ENCODE measurements at regions of chr1 and their contacts with region 1.

Region 1: GRCh38 chr1:112674439-112674985 is at the start of gene MOV10:
- DNase-seq: peak; percentile 84
- H3K4me3 Mint-ChIP-seq: peak within 1 kb of the TSS; percentile 99
- H3K27ac Mint-ChIP-seq: peak within 1 kb of the TSS; percentile 100
- H3K4me1 Mint-ChIP-seq: peaks cover 35% of the 10 kb centered on the region
- H3K27me3 Mint-ChIP-seq: no peaks in the 10 kb centered on the region
- CTCF ChIP-seq: no peak
- total RNA-seq, gene MOV10: 54.9 and 55.6 TPM in 2 replicates

Region 2: DNA sequence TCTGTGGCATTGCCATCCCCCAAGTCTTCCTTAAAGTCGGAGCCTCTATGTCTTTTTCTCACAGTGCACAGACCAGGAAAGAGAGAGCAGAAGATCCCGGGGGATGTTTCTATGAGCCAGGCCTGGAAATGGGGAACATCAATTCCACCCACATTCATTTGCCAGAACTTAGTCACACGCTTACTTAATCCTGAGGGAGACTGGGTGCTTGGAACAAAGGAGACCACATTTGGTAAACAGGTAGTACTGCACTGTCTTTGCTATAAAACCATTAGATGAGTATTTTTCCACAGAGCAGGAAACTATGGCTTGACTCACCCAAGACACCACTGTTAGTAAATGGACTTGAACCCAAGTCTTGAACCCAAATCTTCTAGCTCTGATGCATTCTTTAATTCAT is 339.2 kb before region 1 on chr1:
- CTCF ChIA-PET with region 1: no interaction called
- POLR2A ChIA-PET with region 1: no interaction called
- intact Hi-C with region 1: no loop called
- DNase-seq: peak; percentile 39
- H3K4me3 Mint-ChIP-seq: no peak overlapping the region
- H3K27ac Mint-ChIP-seq: no peak overlapping the region
- H3K4me1 Mint-ChIP-seq: peaks cover 26% of the 10 kb centered on the region
- H3K27me3 Mint-ChIP-seq: no peaks in the 10 kb centered on the region
- CTCF ChIP-seq: no peak

Region 3: GRCh38 chr1:112395821-112396652 is 278.5 kb before region 1 on chr1 and contains the start of gene CTTNBP2NL:
- CTCF ChIA-PET with region 1: interaction called, 11 read pairs
- POLR2A ChIA-PET with region 1: interaction called, 11 read pairs
- intact Hi-C with region 1: loop called (anchors 2 kb)
- DNase-seq: peak; percentile 97
- H3K4me3 Mint-ChIP-seq: peak within 1 kb of the TSS; percentile 98
- H3K27ac Mint-ChIP-seq: peak within 1 kb of the TSS; percentile 98
- H3K4me1 Mint-ChIP-seq: peaks cover 53% of the 10 kb centered on the region
- H3K27me3 Mint-ChIP-seq: no peaks in the 10 kb centered on the region
- CTCF ChIP-seq: no peak
- total RNA-seq, gene CTTNBP2NL: 41.3 and 48.8 TPM in 2 replicates

Region 4: DNA sequence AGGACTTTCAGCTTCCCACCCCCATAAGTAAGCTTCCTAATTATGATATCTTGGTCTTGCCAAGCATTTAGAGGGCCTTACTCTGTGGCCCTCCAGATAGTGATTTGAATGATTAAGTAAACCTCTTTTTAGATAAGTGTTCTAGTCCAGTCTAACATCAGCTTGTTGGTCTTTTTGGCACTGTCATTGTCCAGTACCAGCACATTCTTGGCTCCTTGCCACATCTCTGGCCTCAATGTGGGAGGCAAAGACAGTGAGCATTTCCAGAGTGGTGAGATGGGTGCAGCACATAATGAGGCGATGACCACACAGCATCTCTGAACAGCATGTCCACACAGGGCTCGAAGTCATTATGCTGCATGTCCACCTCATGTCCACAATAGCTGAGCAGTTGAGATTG is 48.8 kb before region 1 on chr1:
- CTCF ChIA-PET with region 1: interaction called, 5 read pairs
- POLR2A ChIA-PET with region 1: interaction called, 76 read pairs
- intact Hi-C with region 1: loop called (anchors 1 kb)
- DNase-seq: peak; percentile 26
- H3K4me3 Mint-ChIP-seq: no peak overlapping the region
- H3K27ac Mint-ChIP-seq: no peak overlapping the region
- H3K4me1 Mint-ChIP-seq: peaks cover 38% of the 10 kb centered on the region
- H3K27me3 Mint-ChIP-seq: no peaks in the 10 kb centered on the region
- CTCF ChIP-seq: no peak

Region 5: GRCh38 chr1:112651205-112651604 is 23.3 kb before region 1 on chr1:
- CTCF ChIA-PET with region 1: interaction called, 22 read pairs
- POLR2A ChIA-PET with region 1: interaction called, 5 read pairs
- intact Hi-C with region 1: no loop called
- DNase-seq: no peak
- H3K4me3 Mint-ChIP-seq: no peak overlapping the region
- H3K27ac Mint-ChIP-seq: no peak overlapping the region
- H3K4me1 Mint-ChIP-seq: peaks cover 2% of the 10 kb centered on the region
- H3K27me3 Mint-ChIP-seq: no peaks in the 10 kb centered on the region
- CTCF ChIP-seq: no peak

Region 6: GRCh38 chr1:112688781-112689193 is 14.3 kb after region 1 on chr1:
- CTCF ChIA-PET with region 1: interaction called, 16 read pairs
- POLR2A ChIA-PET with region 1: interaction called, 85 read pairs
- intact Hi-C with region 1: no loop called
- DNase-seq: no peak
- H3K4me3 Mint-ChIP-seq: no peak overlapping the region
- H3K27ac Mint-ChIP-seq: peak overlapping the region; percentile 96
- H3K4me1 Mint-ChIP-seq: peaks cover 31% of the 10 kb centered on the region
- H3K27me3 Mint-ChIP-seq: no peaks in the 10 kb centered on the region
- CTCF ChIP-seq: no peak

Region 7: DNA sequence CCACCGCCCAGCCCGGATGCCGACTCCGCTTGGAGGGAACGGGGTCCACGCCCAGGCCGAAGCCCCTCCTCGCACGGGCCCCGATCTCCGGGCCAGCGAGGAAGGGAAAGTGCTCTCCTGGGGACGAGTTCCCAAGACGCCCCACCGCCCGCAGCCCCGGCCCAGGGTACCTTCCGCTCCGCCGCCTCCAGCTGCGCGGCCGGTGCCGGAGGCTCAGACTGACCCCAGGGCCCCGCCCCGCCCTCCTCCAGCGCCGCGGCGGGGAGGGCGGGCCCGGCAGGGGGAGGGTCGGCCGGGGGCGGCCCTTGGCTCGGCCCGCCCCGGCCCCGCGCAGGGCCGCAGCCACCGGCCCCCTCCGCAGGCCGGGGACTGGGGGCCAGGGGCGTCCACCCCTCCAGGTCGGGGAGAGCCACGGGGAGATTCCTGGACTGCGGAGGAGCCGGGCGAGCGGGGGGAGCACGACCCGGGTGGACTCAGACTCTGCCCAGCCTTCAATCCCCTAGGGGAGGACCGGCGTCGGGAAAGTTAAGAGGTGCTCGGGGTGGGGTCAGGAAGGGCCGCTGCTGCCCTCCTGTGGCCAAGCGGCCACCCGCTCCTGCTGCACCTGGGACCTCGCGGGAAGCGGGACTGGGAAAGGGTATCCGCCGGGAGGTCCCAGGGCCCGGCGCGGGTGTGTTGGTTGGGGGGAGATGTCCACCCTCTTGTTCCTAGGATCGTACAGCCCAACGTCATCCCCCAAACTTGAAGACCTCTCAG is 32.6 kb after region 1 on chr1 and contains the start of gene RHOC:
- CTCF ChIA-PET with region 1: interaction called, 34 read pairs
- POLR2A ChIA-PET with region 1: interaction called, 71 read pairs
- intact Hi-C with region 1: loop called (anchors 1 kb)
- DNase-seq: peak; percentile 91
- H3K4me3 Mint-ChIP-seq: peak within 1 kb of the TSS; percentile 78
- H3K27ac Mint-ChIP-seq: peak within 1 kb of the TSS; percentile 91
- H3K4me1 Mint-ChIP-seq: peaks cover 37% of the 10 kb centered on the region
- H3K27me3 Mint-ChIP-seq: no peaks in the 10 kb centered on the region
- CTCF ChIP-seq: peak; percentile 86
- total RNA-seq, gene RHOC: 253 and 294 TPM in 2 replicates

Region 8: DNA sequence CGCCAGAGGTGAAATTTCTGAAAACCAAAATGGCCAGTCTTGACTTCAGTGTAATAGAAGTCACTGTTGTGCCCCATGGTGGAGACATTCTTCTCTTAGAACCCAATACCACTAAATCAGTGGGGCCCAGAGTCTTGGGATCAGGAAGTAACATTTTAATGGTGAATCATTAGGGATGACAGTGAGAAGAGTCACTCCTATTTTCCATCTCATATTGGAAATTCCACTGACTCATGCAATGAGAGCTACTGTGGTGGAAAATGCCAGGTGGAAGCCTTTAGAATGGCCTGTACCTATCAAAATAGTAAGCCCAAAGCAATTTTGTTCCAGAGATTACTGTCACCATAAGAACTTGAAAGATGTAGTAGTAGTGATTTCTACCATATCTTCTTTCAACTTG is 61.2 kb after region 1 on chr1:
- CTCF ChIA-PET with region 1: no interaction called
- POLR2A ChIA-PET with region 1: no interaction called
- intact Hi-C with region 1: no loop called
- DNase-seq: peak; percentile 64
- H3K4me3 Mint-ChIP-seq: no peak overlapping the region
- H3K27ac Mint-ChIP-seq: peak overlapping the region; percentile 49
- H3K4me1 Mint-ChIP-seq: no peaks in the 10 kb centered on the region
- H3K27me3 Mint-ChIP-seq: no peaks in the 10 kb centered on the region
- CTCF ChIP-seq: no peak

Measured in MCF 10A (cell line).